Activated T-helper 2 cell treated with anti-CD3 and anti-CD28 coated beads, Interferon-gamma antibody, Interleukin-2, Interleukin-4, amounts not matched to agents 10 μg/mL and 5 μg/mL and 100 μg/mL, durations not matched to agents 14 hours and 24 hours and 36 hours (primary cell): ENCODE measurements at regions of chr4 and their contacts with region 1.

Region 1: DNA sequence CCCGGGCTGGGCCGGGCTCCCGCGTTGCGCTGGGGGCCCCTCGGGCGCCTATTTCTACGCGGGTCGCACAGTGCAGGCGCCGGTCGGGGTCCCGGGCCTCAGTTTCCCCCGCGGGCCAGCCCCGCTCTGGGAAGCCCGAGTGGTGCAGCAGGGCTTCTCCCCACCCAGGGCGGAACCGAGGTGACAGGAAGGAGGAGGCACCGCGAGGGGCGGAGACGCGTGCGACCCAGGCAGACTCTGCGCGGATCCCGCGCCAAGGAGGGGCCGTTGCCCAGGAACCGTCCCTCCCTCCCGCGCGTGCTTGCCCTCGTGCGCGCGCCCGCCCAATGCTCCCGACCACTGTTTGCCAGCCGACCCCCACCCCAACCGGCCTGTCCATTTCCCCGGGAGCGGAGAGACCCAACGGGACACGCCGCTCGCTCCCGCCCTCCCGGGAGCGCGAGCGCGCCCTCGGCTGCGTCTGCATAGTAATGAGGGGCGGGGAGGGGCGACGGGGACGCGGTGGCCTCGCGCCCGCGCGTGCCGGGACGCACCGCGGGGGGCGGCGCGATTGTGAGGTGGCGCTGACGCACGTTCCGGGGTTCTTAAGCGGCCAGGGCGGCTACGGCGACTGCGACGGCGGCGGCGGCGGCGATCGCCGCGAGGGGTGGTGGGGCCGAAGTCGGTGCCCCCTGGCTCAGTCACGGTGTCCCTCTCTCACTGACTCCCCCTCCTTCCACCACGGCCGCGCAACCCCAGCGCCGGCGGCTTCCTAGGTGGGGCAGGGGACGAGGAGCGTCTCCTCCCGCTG is at the start of gene CPEB2:
- DNase-seq: peak; percentile 89
- H3K4me3 Mint-ChIP-seq: peak within 1 kb of the TSS; percentile 87
- H3K27ac Mint-ChIP-seq: peak within 1 kb of the TSS; percentile 92
- H3K4me1 Mint-ChIP-seq: peaks cover 36% of the 10 kb centered on the region
- H3K27me3 Mint-ChIP-seq: no peaks in the 10 kb centered on the region
- total RNA-seq, gene CPEB2: 11.0 and 12.3 TPM in 2 replicates

Region 2: DNA sequence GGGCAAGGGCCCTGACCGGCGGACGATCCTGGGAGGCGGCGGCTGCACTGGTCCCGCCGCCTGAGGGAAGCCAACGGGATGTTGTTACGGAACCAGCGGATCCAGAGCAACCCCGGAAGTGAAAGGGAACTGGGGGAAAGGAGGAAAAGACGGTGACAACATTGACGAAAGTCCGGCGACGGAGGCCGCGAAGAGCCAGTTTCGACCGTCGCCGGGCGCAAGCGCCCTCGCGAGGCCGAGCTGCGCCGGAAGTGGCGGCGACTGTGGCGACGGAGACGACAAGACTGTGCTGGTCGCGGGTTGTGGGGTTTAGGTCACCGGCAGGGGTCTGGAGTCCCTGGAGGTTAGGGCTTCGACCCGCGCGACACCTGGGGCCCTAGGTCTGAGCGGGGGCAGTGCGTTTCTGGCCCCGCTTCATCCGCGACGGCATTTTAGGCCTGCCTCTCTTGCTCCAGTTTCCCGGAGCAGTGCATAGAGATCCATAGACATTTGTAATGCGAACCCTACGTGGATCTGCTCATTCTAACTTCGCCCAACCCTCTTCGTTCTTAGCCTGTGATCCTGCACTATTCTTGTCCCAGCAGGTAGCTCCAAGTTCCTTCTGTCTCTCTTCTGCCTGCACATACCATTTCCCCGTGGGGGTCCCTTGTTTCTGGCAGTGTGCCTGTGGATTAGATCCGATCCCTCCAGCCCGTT is 1374.3 kb before region 1 on chr4 and contains the start of gene BOD1L1:
- intact Hi-C with region 1: loop called (anchors 1 kb)
- DNase-seq: peak; percentile 78
- H3K4me3 Mint-ChIP-seq: peak within 1 kb of the TSS; percentile 98
- H3K27ac Mint-ChIP-seq: peak within 1 kb of the TSS; percentile 96
- H3K4me1 Mint-ChIP-seq: peaks cover 21% of the 10 kb centered on the region
- H3K27me3 Mint-ChIP-seq: no peaks in the 10 kb centered on the region
- total RNA-seq, gene BOD1L1: 41.5 and 42.2 TPM in 2 replicates

Region 3: DNA sequence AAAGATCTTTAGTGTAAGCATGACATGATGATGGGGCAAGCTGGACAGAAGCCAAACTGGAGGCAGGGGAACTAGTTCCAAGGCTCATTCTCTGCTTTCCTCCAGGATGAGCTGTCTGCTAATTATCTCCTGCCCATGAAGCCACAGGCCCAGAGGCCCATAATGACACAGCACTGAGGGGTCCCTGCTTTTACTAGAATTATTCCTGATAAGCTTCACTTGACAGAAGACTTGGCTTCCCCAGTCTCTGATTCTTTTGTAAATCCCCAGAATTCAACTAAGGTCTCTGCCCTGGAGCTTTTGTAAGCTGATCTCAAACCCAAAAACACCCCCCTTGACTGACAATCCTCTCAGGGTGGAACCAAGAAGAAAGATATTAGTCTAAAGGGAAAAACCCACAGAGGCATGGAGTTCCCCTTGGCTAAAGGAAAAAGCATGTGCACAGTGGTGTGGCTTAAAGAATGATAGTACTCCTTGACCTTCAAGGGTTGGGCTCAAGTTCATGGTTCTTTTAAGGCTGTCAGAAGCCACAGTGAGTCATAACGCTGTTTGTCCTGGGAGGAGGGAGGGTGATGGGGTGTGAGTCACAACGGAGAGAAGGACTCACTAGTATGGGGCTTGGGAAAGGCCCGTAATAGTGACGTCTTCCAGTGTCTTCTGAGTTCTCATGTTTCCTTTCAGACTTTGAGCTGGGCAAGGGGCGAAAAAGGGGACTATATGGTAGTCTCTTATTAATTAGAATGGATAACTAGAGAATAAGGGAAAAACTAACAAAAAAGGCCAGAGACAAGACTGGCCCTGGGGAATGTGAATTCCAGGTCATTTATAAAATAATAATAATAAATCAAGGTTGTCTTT is 145.8 kb before region 1 on chr4:
- intact Hi-C with region 1: loop called (anchors 1 kb)
- DNase-seq: peak; percentile 24
- H3K4me3 Mint-ChIP-seq: no peak overlapping the region
- H3K27ac Mint-ChIP-seq: peak overlapping the region; percentile 81
- H3K4me1 Mint-ChIP-seq: peaks cover 26% of the 10 kb centered on the region
- H3K27me3 Mint-ChIP-seq: no peaks in the 10 kb centered on the region

Region 4: GRCh38 chr4:15368856-15369255 is 366.8 kb after region 1 on chr4:
- intact Hi-C with region 1: loop called (anchors 2 kb)
- DNase-seq: no peak
- H3K4me3 Mint-ChIP-seq: no peak overlapping the region
- H3K27ac Mint-ChIP-seq: peak overlapping the region; percentile 56
- H3K4me1 Mint-ChIP-seq: peaks cover 53% of the 10 kb centered on the region
- H3K27me3 Mint-ChIP-seq: peaks cover 11% of the 10 kb centered on the region

Region 5: GRCh38 chr4:15756361-15756861 is 754.3 kb after region 1 on chr4:
- intact Hi-C with region 1: loop called (anchors 1 kb)
- DNase-seq: peak; percentile 76
- H3K4me3 Mint-ChIP-seq: peak overlapping the region; percentile 80
- H3K27ac Mint-ChIP-seq: peak overlapping the region; percentile 96
- H3K4me1 Mint-ChIP-seq: peaks cover 54% of the 10 kb centered on the region
- H3K27me3 Mint-ChIP-seq: no peaks in the 10 kb centered on the region